HEK293 (cell line): ENCODE measurements at regions of chr22 and their contacts with region 1.

Region 1: GRCh38 chr22:20792947-20793294 is 19.0 kb downstream of the SERPIND1 start:
- H3K4me3 ChIP-seq: no peak overlapping the region
- H3K27ac ChIP-seq: no peak overlapping the region
- H3K4me1 ChIP-seq: no peaks in the 10 kb centered on the region
- CTCF ChIP-seq: no peak

Region 2: GRCh38 chr22:20647586-20648305 is 145.2 kb before region 1 on chr22:
- CTCF ChIA-PET with region 1: no interaction called
- POLR2A ChIA-PET with region 1: no interaction called
- H3K4me3 ChIP-seq: no peak overlapping the region
- H3K27ac ChIP-seq: no peak overlapping the region
- H3K4me1 ChIP-seq: no peaks in the 10 kb centered on the region
- CTCF ChIP-seq: no peak

Region 3: DNA sequence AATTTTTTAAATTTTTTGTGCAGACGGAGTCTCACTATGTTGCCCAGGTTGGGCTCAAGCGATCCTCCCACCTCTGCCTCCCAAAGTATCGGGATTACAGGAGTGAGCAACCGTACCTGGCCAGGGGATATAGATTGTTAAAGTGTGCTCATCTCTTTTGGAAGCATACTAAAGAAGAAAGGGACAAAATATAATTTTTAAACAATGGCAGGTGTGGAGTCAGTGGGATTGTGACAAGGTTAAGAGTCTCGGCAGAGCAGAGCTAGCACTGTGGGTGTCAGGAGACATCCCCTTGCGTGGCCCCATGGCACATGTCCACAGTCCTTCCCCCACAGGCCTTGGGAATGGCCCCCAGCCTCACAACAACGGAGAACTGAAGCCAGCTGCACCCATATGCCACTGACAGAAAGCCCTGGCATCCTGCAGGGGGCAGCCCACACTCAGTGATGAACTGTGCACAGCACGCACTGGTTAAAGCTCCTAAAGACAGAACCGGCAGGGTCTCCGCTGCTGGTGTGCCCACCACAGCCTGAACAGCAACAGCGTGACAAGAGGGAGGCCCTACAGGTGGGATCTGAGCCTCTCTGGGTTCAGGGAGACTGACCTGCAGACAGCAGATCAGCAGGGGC is 10.9 kb after region 1 on chr22:
- CTCF ChIA-PET with region 1: interaction called, 15 read pairs
- POLR2A ChIA-PET with region 1: no interaction called
- H3K4me3 ChIP-seq: no peak overlapping the region
- H3K27ac ChIP-seq: no peak overlapping the region
- H3K4me1 ChIP-seq: no peaks in the 10 kb centered on the region
- CTCF ChIP-seq: peak; percentile 56; the same call in 1 of the 2 replicates